ENCODE measurements at regions of chr13 and their contacts with region 1.

Region 1: GRCh38 chr13:26482451-26483197 is 74.9 kb upstream of the WASF3 start:
- DNase-seq: peak; percentile 57 to 68 (median 62)
- ATAC-seq: peak; percentile 76
- H3K4me3 ChIP-seq: no peak overlapping the region
- H3K27ac ChIP-seq: no peak overlapping the region
- H3K4me1 ChIP-seq: no peaks in the 10 kb centered on the region; a peak in 1 of 5 replicates
- H3K27me3 ChIP-seq: peaks cover under 1 to 20% of the 10 kb centered on the region in 2 experiments; a peak in 3 of 5 replicates
- CTCF ChIP-seq: peak; percentile 61 to 74 (median 71)
- EP300 ChIP-seq: no peak
- POLR2A ChIP-seq: no peak
- RAD21 ChIP-seq: peak in 1 of 2 experiments; percentile 51; a peak in 2 of 4 replicates

Region 2: GRCh38 chr13:26698392-26699196 is 216.0 kb after region 1 on chr13:
- CTCF ChIA-PET with region 1: no interaction called
- POLR2A ChIA-PET with region 1: no interaction called
- in situ Hi-C with region 1: no loop called
- intact Hi-C with region 1: loop called (anchors 5 kb)
- DNase-seq: peak; percentile 63 to 73 (median 68)
- ATAC-seq: peak; percentile 88
- H3K4me3 ChIP-seq: no peak overlapping the region
- H3K27ac ChIP-seq: no peak overlapping the region
- H3K4me1 ChIP-seq: no peaks in the 10 kb centered on the region
- H3K27me3 ChIP-seq: no peaks in the 10 kb centered on the region; a peak in 1 of 5 replicates
- CTCF ChIP-seq: peak; percentile 85 to 90 (median 85)
- EP300 ChIP-seq: no peak
- POLR2A ChIP-seq: no peak
- RAD21 ChIP-seq: peak; percentile 58 to 82

Region 3: DNA sequence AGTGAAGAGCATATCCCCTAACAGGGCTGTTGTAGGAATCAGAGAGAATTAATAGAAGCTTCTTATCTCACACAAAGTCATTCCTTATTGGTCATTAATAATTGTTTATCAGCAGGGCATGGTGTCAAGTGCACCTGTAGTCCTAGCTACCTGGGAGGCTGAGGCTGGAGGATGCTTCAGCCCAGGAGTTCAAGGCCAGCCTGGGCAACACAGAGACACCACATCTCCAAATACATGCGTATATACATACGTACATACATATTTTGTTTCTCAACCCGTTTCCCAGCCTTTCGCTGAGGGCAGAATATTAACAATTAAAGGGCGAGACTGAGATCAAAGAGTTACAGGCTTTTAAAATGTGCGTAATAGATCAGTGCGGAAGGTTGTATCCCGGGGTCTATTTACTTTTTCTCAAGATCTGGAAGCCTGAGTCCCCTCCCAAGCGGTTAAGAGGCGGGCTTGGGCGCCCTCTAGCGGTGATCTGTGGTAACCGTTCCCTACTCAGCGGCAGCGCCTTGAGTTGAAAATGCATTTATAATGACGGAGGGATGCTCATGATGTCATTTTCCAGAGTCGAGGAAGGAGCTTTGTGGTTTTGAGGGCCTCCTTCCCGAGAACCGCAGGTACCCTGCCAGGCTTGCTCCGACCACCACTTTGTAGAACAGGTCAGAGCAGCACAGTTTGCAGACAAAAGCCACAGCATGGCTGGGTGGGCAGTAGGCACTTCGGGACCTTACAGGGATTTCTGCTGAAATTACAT is 447.5 kb after region 1 on chr13:
- CTCF ChIA-PET with region 1: interaction called, 4 read pairs
- POLR2A ChIA-PET with region 1: no interaction called
- in situ Hi-C with region 1: no loop called
- intact Hi-C with region 1: loop called (anchors 10 kb)
- DNase-seq: peak; percentile 71 to 77 (median 72)
- ATAC-seq: peak; percentile 95
- H3K4me3 ChIP-seq: no peak overlapping the region
- H3K27ac ChIP-seq: no peak overlapping the region
- H3K4me1 ChIP-seq: no peaks in the 10 kb centered on the region; a peak in 1 of 5 replicates
- H3K27me3 ChIP-seq: peaks cover 0 to 15% of the 10 kb centered on the region in 2 experiments
- CTCF ChIP-seq: peak; percentile 67 to 84 (median 81)
- EP300 ChIP-seq: no peak
- POLR2A ChIP-seq: no peak
- RAD21 ChIP-seq: peak; percentile 31 to 64

Measured in K562 (cell line).